ENCODE measurements at regions of chrX and their contacts with region 1.

Region 1: DNA sequence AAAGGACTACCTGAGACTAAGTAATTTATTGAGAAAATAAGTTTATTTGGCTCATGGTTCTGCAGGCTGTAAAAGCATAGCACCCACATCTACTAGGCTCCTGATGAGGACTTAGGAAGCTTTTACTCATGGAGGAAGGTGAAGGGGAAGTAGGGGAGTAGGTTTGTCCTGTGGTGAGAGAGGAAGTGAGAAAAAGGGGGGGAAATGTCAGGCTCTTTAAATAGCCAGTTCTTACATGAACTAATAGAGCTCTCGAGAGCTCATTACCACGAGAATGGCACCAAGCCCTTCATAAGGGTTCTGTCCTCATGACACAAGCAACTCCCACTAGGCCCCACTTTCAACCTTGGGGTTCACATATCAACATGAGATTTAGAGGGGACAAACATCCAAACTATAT is 125.5 kb upstream of the NRK start:
- DNase-seq: no peak
- ATAC-seq: no peak
- H3K4me3 ChIP-seq: no peak overlapping the region
- H3K27ac ChIP-seq: no peak overlapping the region
- H3K4me1 ChIP-seq: no peaks in the 10 kb centered on the region
- H3K27me3 ChIP-seq: no peaks in the 10 kb centered on the region
- CTCF ChIP-seq: no peak

Region 2: DNA sequence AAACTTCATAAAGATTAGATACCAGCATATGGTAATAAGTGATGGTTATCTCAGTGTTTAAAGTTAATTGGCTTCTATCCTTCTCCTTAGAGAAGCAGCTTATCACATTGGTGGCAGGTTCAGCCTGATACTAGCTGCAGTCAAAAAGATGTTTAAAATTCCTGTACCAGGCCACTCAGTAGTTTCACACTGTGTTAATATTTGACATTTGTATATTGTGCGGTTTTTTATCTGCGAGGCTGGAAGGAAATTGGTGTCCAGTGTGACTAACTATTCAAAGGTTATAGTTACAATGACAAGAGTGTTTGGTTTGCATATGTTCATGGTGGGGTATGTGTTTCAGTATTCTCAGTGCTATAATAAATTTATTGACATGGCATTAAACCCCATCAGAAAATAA is 1078.1 kb after region 1 on chrX:
- CTCF ChIA-PET with region 1: interaction called, 10 read pairs
- POLR2A ChIA-PET with region 1: no interaction called
- in situ Hi-C with region 1: no loop called
- intact Hi-C with region 1: no loop called
- DNase-seq: no peak
- ATAC-seq: no peak
- H3K4me3 ChIP-seq: no peak overlapping the region
- H3K27ac ChIP-seq: no peak overlapping the region
- H3K4me1 ChIP-seq: no peaks in the 10 kb centered on the region
- H3K27me3 ChIP-seq: no peaks in the 10 kb centered on the region
- CTCF ChIP-seq: no peak

Measured in Panc1 (cell line).